ENCODE measurements at regions of chrX and their contacts with region 1.

Region 1: GRCh38 chrX:131987252-131987651 is 35.9 kb upstream of the STK26 start:
- DNase-seq: peak in 6 of 9 experiments; percentile 2 to 82 (median 34)
- ATAC-seq: peak; percentile 96
- H3K4me3 ChIP-seq: peak overlapping the region in 1 of 2 experiments; percentile 21
- H3K4me3 Mint-ChIP-seq: peak overlapping the region; percentile 45
- H3K27ac ChIP-seq: peak overlapping the region; percentile 54 to 87
- H3K27ac Mint-ChIP-seq: peak overlapping the region; percentile 97
- H3K4me1 ChIP-seq: peaks cover 56% of the 10 kb centered on the region
- H3K4me1 Mint-ChIP-seq: peaks cover 62% of the 10 kb centered on the region
- H3K27me3 ChIP-seq: no peaks in the 10 kb centered on the region
- H3K27me3 Mint-ChIP-seq: no peaks in the 10 kb centered on the region
- CTCF ChIP-seq: no peak

Region 2: DNA sequence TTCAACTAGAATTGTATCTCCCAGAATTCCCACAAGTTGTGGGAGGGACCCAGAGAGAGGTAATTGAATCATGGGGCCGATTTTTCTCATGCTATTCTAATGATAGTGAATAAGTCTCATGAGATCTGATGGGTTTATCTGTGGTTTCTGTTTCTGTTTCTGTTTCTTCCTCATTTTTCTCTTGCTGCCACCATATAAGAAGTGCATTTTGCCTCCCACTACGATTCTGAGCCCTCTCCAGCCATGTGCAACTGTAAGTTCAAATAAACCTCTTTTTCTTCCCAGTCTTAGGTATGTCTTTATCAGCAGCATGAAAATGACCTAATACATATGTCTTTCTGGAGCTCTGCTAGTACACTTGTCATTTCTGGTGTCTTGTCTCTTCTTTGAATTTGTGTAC is 465.4 kb before region 1 on chrX:
- CTCF ChIA-PET with region 1: no interaction called
- POLR2A ChIA-PET with region 1: no interaction called
- intact Hi-C with region 1: no loop called
- DNase-seq: no peak
- ATAC-seq: no peak
- H3K4me3 ChIP-seq: no peak overlapping the region
- H3K4me3 Mint-ChIP-seq: no peak overlapping the region
- H3K27ac ChIP-seq: no peak overlapping the region
- H3K27ac Mint-ChIP-seq: no peak overlapping the region
- H3K4me1 ChIP-seq: no peaks in the 10 kb centered on the region
- H3K4me1 Mint-ChIP-seq: no peaks in the 10 kb centered on the region
- H3K27me3 ChIP-seq: no peaks in the 10 kb centered on the region
- H3K27me3 Mint-ChIP-seq: no peaks in the 10 kb centered on the region
- CTCF ChIP-seq: no peak

Region 3: DNA sequence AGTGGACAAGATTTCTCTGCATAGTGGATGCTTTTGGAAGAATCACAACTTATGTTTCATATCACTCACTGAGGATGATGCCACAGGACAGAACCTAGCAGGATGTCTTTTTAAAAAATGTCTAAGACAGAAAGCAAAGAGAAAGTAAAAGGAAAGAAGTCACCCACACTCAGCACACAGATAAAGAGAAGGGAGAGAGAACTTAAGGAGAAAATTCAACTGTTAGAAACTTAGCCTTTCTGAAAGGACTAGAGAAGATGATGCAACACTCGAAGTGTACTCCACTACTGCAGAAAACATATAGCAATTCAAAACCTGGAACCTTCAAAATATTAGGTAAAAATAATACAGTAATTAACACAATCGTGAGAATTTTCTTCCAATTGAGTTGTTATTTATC is 16.9 kb before region 1 on chrX:
- CTCF ChIA-PET with region 1: no interaction called
- POLR2A ChIA-PET with region 1: no interaction called
- intact Hi-C with region 1: loop called in 1 of 2 experiments (anchors 2 kb)
- DNase-seq: no peak
- ATAC-seq: peak; percentile 23
- H3K4me3 ChIP-seq: no peak overlapping the region
- H3K4me3 Mint-ChIP-seq: peak overlapping the region; percentile 69
- H3K27ac ChIP-seq: no peak overlapping the region
- H3K27ac Mint-ChIP-seq: peak overlapping the region; percentile 75
- H3K4me1 ChIP-seq: peaks cover 6% of the 10 kb centered on the region
- H3K4me1 Mint-ChIP-seq: peaks cover 8% of the 10 kb centered on the region
- H3K27me3 ChIP-seq: no peaks in the 10 kb centered on the region
- H3K27me3 Mint-ChIP-seq: no peaks in the 10 kb centered on the region
- CTCF ChIP-seq: no peak

Region 4: DNA sequence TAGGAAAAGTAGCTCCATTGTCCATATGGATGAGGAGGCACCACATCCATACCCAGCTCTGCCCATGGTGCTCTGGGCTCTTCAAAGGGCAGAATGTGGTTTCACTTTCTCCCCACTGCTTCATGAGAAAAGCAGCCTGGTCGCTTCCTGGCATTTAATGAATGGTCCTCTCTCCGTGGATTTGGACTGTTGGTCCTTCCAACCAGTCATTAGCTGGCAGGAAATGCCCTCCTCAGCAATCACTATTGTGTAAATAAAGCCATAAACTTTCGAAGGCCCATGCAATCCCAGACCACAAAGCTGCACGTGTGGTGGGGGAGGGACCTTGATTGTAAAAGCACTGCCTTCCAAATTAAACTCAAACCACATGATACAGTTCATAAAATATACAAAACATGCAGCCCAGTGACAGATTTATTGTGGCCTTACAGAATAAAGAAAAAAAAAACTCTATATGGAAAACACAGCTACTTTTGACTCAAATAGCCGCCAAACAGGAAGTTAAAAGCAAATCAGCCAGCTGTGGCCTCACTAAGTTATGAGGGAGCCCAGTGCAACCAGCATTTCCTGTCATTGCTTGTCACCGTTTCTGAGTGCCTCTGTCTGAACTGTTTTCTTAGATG is 493.4 kb after region 1 on chrX:
- CTCF ChIA-PET with region 1: no interaction called
- POLR2A ChIA-PET with region 1: no interaction called
- intact Hi-C with region 1: no loop called
- DNase-seq: peak in 8 of 9 experiments; percentile 21 to 75 (median 46)
- ATAC-seq: peak; percentile 90
- H3K4me3 ChIP-seq: peak overlapping the region; percentile 51 to 52
- H3K4me3 Mint-ChIP-seq: peak overlapping the region; percentile 84
- H3K27ac ChIP-seq: peak overlapping the region; percentile 65 to 84
- H3K27ac Mint-ChIP-seq: peak overlapping the region; percentile 93
- H3K4me1 ChIP-seq: peaks cover 30% of the 10 kb centered on the region
- H3K4me1 Mint-ChIP-seq: peaks cover 58% of the 10 kb centered on the region
- H3K27me3 ChIP-seq: no peaks in the 10 kb centered on the region
- H3K27me3 Mint-ChIP-seq: no peaks in the 10 kb centered on the region
- CTCF ChIP-seq: no peak